ENCODE measurements at regions of chr12 and their contacts with region 1.

Region 1: DNA sequence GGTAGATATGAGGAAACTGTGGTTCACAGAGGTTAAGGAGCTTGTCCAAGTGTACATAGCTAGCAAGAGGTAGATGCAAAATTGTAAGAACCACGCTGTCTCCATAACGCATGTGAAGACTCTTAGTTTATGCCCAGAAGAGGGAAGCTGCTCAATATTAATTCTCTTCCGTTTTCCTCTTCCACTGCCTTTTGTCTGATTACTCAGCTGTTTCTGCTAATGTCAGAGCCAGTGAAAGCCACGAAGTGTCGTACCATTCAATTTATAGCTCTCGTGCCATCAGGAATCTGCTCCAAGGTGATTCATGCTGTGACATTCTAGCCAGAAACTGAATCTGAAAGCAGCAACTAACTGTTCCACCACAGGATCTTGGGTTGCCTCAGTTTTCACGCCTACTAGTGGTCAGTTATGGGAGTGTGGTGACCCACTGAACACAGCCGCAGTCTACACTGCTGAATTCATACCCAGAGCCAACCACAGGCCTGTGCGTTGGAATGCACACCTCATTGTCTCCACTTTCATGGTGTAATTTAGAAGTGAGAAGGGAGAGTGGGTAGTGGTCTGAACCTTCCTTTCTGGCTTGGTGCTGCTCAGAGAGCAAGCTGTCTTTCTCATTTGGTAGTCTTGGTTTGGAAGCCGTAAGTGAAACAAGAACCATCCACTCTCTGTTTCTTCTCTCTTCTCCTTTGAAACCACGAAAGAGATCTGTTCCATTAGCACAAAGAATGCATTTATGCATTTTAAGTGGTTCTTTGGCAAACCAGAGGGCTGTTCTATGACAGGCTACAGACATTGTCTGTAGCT is 74.2 kb upstream of the NAP1L1 start:
- DNase-seq: peak; percentile 91
- ATAC-seq: peak; percentile 98
- H3K4me3 ChIP-seq: 0 out of 2 replicates have a peak overlapping the region, but pooled peaks have one; percentile 16
- H3K27ac ChIP-seq: peak overlapping the region; percentile 29; the same call in 1 of the 2 replicates
- H3K4me1 ChIP-seq: peaks cover 14% of the 10 kb centered on the region
- H3K27me3 ChIP-seq: no peaks in the 10 kb centered on the region
- CTCF ChIP-seq: peak; percentile 77 to 79 (median 78)
- EP300 ChIP-seq: peak; percentile 77 to 89
- POLR2A ChIP-seq: no peak
- RAD21 ChIP-seq: peak; percentile 68

Region 2: DNA sequence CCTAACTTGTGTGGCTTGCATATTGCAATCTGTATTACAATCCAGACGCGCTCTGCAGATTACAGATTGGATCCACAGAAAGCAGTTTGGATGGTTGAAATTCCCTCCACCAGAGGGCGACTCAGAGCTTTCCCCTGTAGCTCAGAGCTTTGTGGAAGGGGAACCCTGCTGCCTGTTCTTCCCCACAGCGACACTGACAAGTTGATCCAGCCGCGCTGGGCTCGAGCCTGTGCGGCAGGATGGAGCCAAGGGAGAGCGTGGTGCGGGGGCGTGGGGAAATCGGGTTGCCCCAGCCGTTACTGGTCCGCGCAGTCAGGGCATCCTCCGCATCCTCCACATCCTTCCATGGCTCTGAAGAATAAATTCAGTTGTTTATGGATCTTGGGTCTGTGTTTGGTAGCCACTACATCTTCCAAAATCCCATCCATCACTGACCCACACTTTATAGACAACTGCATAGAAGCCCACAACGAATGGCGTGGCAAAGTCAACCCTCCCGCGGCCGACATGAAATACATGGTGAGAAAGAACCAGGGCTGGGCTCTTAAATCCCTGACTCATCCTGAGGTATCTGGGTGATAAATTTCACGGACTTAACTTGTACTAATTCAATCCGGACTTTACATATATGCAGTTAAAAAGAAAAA is 824.2 kb before region 1 on chr12 and contains the start of gene GLIPR1L1:
- CTCF ChIA-PET with region 1: interaction called, 3 read pairs
- POLR2A ChIA-PET with region 1: no interaction called
- RAD21 ChIA-PET with region 1: no interaction called
- SMC1A ChIA-PET with region 1: no interaction called
- in situ Hi-C with region 1: no loop called
- intact Hi-C with region 1: loop called (anchors 10 kb)
- DNase-seq: peak; percentile 44
- ATAC-seq: peak; percentile 83
- H3K4me3 ChIP-seq: peak within 1 kb of the TSS; percentile 57; the same call in 1 of the 2 replicates
- H3K27ac ChIP-seq: no peak within 1 kb of the TSS
- H3K4me1 ChIP-seq: peaks cover 4% of the 10 kb centered on the region
- H3K27me3 ChIP-seq: no peaks in the 10 kb centered on the region
- CTCF ChIP-seq: peak; percentile 83 to 90 (median 89)
- EP300 ChIP-seq: no peak
- POLR2A ChIP-seq: no peak
- RAD21 ChIP-seq: peak; percentile 87
- polyA plus RNA-seq, gene GLIPR1L1: 0.10 to 0.13 TPM

Region 3: GRCh38 chr12:76144245-76144549 is 14.5 kb before region 1 on chr12:
- CTCF ChIA-PET with region 1: interaction called, 21 read pairs
- POLR2A ChIA-PET with region 1: interaction called, 8 read pairs
- RAD21 ChIA-PET with region 1: interaction called, 10 read pairs
- SMC1A ChIA-PET with region 1: interaction called, 20 read pairs
- in situ Hi-C with region 1: no loop called
- intact Hi-C with region 1: loop called (anchors 1 kb)
- DNase-seq: no peak
- ATAC-seq: peak; percentile 53
- H3K4me3 ChIP-seq: no peak overlapping the region
- H3K27ac ChIP-seq: no peak overlapping the region
- H3K4me1 ChIP-seq: peaks cover 20% of the 10 kb centered on the region
- H3K27me3 ChIP-seq: no peaks in the 10 kb centered on the region
- CTCF ChIP-seq: no peak
- EP300 ChIP-seq: no peak
- POLR2A ChIP-seq: no peak
- RAD21 ChIP-seq: no peak

Region 4: GRCh38 chr12:76176940-76177339 is 18.2 kb after region 1 on chr12:
- CTCF ChIA-PET with region 1: interaction called, 11 read pairs
- POLR2A ChIA-PET with region 1: interaction called, 4 read pairs
- RAD21 ChIA-PET with region 1: interaction called, 5 read pairs
- SMC1A ChIA-PET with region 1: interaction called, 8 read pairs
- in situ Hi-C with region 1: no loop called
- intact Hi-C with region 1: no loop called
- DNase-seq: no peak
- ATAC-seq: no peak
- H3K4me3 ChIP-seq: no peak overlapping the region
- H3K27ac ChIP-seq: no peak overlapping the region
- H3K4me1 ChIP-seq: peaks cover 15% of the 10 kb centered on the region
- H3K27me3 ChIP-seq: no peaks in the 10 kb centered on the region
- CTCF ChIP-seq: no peak
- EP300 ChIP-seq: no peak
- POLR2A ChIP-seq: no peak
- RAD21 ChIP-seq: no peak

Region 5: DNA sequence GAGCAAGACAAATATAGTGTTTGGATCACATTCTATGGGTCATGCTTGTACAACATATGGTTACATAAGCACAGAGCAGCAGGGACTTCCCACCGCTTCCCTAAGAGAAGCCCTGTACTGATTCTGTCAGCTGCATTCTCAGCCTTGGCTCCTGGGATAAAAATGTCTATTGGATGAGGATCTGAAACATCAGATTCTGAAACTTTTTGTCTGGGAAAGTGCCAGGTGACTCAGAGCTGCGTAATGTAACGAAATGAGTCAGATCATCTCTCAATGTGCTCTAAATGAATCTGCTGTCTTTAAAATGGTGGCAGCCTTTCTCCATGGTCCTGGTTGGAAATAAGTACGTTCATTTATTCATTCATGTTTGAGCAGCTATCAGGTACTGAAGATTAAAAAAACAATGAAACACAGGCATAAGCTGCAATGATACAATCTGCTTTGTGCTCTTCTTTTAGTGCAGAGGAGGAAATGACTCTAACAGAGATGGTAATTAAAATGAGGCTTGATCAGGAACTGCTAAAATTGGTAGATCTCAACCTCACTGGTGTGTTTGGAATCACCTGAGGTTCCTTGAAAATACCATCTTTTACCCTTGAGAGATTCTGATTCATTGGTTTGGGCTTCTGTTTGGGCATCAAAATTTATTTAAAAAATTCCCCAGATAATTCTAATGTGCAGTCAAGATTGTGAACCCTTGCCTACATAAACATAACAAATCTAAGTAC is 24.9 kb after region 1 on chr12:
- CTCF ChIA-PET with region 1: interaction called, 11 read pairs
- POLR2A ChIA-PET with region 1: no interaction called
- RAD21 ChIA-PET with region 1: no interaction called
- SMC1A ChIA-PET with region 1: interaction called, 6 read pairs
- in situ Hi-C with region 1: no loop called
- intact Hi-C with region 1: loop called (anchors 1 kb)
- DNase-seq: peak; percentile 81
- ATAC-seq: peak; percentile 91
- H3K4me3 ChIP-seq: no peak overlapping the region
- H3K27ac ChIP-seq: peak overlapping the region; percentile 61
- H3K4me1 ChIP-seq: peaks cover 21% of the 10 kb centered on the region
- H3K27me3 ChIP-seq: no peaks in the 10 kb centered on the region
- CTCF ChIP-seq: no peak
- EP300 ChIP-seq: peak in 1 of 2 experiments; percentile 86; a peak in 1 of 4 replicates
- POLR2A ChIP-seq: no peak
- RAD21 ChIP-seq: no peak

Region 6: GRCh38 chr12:76455582-76456345 is 297.0 kb after region 1 on chr12:
- CTCF ChIA-PET with region 1: interaction called, 7 read pairs
- POLR2A ChIA-PET with region 1: no interaction called
- RAD21 ChIA-PET with region 1: no interaction called
- SMC1A ChIA-PET with region 1: interaction called, 5 read pairs
- in situ Hi-C with region 1: no loop called
- intact Hi-C with region 1: loop called (anchors 5 kb)
- DNase-seq: peak; percentile 33
- ATAC-seq: peak; percentile 99
- H3K4me3 ChIP-seq: no peak overlapping the region
- H3K27ac ChIP-seq: no peak overlapping the region
- H3K4me1 ChIP-seq: no peaks in the 10 kb centered on the region
- H3K27me3 ChIP-seq: no peaks in the 10 kb centered on the region
- CTCF ChIP-seq: peak; percentile 54 to 73 (median 71); a peak in 5 of 6 replicates
- EP300 ChIP-seq: no peak
- POLR2A ChIP-seq: no peak
- RAD21 ChIP-seq: peak; percentile 89

Region 7: GRCh38 chr12:76504606-76505005 is 345.9 kb after region 1 on chr12:
- CTCF ChIA-PET with region 1: no interaction called
- POLR2A ChIA-PET with region 1: no interaction called
- RAD21 ChIA-PET with region 1: no interaction called
- SMC1A ChIA-PET with region 1: no interaction called
- in situ Hi-C with region 1: no loop called
- intact Hi-C with region 1: no loop called
- DNase-seq: no peak
- ATAC-seq: no peak
- H3K4me3 ChIP-seq: no peak overlapping the region
- H3K27ac ChIP-seq: no peak overlapping the region
- H3K4me1 ChIP-seq: no peaks in the 10 kb centered on the region
- H3K27me3 ChIP-seq: no peaks in the 10 kb centered on the region
- CTCF ChIP-seq: no peak
- EP300 ChIP-seq: no peak
- POLR2A ChIP-seq: no peak
- RAD21 ChIP-seq: no peak

Measured in GM12878 (cell line).